Naive thymus-derived CD4-positive, alpha-beta T cell (primary cell): ENCODE measurements at regions of chr10 and their contacts with region 1.

Region 1: DNA sequence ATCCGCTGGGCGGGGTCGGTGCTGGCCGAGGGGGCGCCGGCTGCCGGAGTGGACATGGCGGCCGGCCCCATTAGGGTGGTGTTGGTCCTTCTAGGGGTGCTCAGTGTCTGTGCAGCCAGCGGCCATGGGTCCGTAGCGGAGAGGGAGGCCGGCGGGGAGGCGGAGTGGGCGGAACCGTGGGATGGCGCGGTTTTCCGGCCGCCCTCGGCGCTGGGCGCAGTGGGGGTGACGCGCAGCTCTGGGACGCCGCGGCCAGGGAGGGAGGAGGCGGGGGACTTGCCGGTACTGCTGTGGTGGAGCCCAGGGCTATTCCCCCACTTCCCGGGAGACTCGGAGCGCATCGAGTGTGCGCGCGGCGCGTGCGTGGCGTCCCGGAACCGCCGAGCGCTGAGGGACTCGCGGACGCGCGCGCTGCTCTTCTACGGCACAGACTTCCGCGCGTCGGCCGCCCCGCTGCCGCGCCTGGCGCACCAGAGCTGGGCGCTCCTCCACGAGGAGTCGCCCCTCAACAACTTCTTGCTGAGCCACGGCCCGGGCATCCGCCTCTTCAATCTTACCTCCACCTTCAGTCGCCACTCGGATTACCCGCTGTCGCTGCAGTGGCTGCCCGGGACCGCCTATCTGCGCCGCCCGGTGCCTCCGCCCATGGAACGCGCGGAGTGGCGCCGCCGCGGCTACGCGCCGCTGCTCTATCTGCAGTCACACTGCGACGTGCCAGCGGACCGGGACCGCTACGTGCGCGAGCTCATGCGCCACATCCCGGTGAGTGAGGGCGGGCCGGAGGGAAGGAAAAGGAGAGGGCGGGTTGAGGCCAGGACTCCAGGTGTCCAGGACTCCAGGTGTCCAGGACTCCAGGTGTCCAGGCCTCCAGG is 9.3 kb upstream of the CHCHD1 start:
- DNase-seq: peak; percentile 75 to 90 (median 83)
- ATAC-seq: peak; percentile 80
- H3K4me3 ChIP-seq: peak overlapping the region; percentile 69
- H3K4me3 Mint-ChIP-seq: peak overlapping the region; percentile 87 to 97 (median 95)
- H3K27ac ChIP-seq: peak overlapping the region; percentile 85
- H3K27ac Mint-ChIP-seq: peak overlapping the region; percentile 89 to 97 (median 94)
- H3K4me1 ChIP-seq: peaks cover 27 to 30% of the 10 kb centered on the region in 2 donors
- H3K4me1 Mint-ChIP-seq: peaks cover 34 to 73% (median 64%) of the 10 kb centered on the region in 7 donors
- H3K27me3 ChIP-seq: no peaks in the 10 kb centered on the region
- H3K27me3 Mint-ChIP-seq: no peaks in the 10 kb centered on the region

Region 2: DNA sequence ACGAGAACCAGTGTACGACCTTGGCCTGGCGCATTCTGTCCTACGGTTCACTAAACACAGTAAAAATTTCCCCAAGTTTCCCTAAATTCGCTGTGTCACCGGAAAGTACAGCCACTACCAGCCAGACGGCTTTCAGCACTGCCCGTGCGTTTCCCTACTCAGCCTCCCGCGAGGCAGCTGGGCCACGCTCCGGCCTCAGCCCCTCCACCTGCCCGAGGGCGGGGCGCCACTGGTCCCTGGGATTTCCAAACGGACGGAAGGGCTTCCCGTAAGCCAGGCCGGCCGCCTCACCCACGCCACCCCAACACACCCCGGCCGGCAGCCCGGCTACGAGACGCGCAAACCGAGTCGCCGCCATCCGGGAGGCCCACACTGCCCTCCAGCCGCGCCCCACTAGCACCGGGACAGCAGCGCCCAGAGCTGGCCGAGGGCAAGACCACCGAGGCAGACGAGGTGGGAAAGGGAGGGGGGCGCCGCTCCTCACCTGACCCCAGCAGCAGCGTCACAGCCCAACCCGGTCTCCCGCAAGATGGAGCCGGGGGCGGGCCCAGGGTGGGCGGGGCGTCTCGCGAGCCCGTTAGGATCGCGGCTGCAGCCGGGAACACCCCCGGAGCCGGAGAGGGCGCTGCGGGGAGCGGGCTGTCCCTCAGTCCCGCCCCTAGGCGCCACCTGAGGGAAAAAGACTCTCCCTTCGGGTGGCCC is 358.8 kb before region 1 on chr10 and contains the start of gene ANXA7:
- CTCF ChIA-PET with region 1: no interaction called
- POLR2A ChIA-PET with region 1: interaction called, 3 read pairs
- intact Hi-C with region 1: loop called in 1 of 2 experiments (anchors 10 kb)
- DNase-seq: peak; percentile 78 to 93 (median 85)
- ATAC-seq: peak; percentile 99
- H3K4me3 ChIP-seq: peak within 1 kb of the TSS; percentile 78
- H3K4me3 Mint-ChIP-seq: peak within 1 kb of the TSS; percentile 82 to 97 (median 94)
- H3K27ac ChIP-seq: peak within 1 kb of the TSS; percentile 98
- H3K27ac Mint-ChIP-seq: peak within 1 kb of the TSS; percentile 83 to 95 (median 90)
- H3K4me1 ChIP-seq: peaks cover 8 to 16% of the 10 kb centered on the region in 2 donors
- H3K4me1 Mint-ChIP-seq: peaks cover 39 to 60% (median 53%) of the 10 kb centered on the region in 7 donors
- H3K27me3 ChIP-seq: no peaks in the 10 kb centered on the region
- H3K27me3 Mint-ChIP-seq: peaks cover 0 to 4% (median 0%) of the 10 kb centered on the region in 5 donors
- total RNA-seq, gene ANXA7: 74.8 to 118 (median 97.3) TPM

Region 3: GRCh38 chr10:73591935-73592699 is 180.4 kb before region 1 on chr10:
- CTCF ChIA-PET with region 1: no interaction called
- POLR2A ChIA-PET with region 1: no interaction called
- intact Hi-C with region 1: no loop called
- DNase-seq: peak in 4 of 9 donors; percentile 6 to 28 (median 14)
- ATAC-seq: peak; percentile 66
- H3K4me3 ChIP-seq: no peak overlapping the region
- H3K4me3 Mint-ChIP-seq: peak overlapping the region; percentile 34 to 84 (median 70)
- H3K27ac ChIP-seq: peak overlapping the region; percentile 31
- H3K27ac Mint-ChIP-seq: peak overlapping the region; percentile 58 to 84 (median 78)
- H3K4me1 ChIP-seq: peaks cover 0 to 17% of the 10 kb centered on the region in 2 donors
- H3K4me1 Mint-ChIP-seq: peaks cover 12 to 32% (median 27%) of the 10 kb centered on the region in 7 donors
- H3K27me3 ChIP-seq: no peaks in the 10 kb centered on the region
- H3K27me3 Mint-ChIP-seq: no peaks in the 10 kb centered on the region

Region 4: DNA sequence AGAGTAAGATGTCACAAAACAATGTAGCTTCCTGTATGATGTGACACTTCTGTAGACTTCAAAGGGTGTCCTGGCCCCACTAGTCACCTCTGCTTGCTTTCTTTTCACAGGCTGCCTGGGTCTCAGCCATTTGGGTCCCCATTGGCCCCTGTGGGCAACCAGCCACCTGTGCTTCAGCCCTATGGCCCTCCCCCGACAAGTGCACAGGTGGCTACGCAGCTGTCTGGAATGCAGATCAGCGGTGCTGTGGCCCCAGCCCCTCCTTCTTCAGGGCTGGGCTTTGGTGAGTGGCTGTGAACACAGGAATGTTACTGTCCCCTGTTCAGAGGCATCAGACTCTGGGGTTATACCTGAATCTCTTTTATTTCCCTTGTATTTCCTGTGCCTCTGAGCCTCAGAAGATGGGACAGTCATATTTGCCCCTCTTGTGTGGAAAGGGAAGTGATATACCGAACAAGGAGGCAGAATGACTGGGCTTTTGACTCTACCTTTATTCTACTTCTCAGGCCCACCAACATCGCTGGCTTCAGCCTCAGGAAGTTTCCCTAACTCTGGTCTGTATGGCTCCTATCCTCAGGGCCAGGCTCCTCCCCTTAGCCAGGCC is 12.9 kb before region 1 on chr10:
- CTCF ChIA-PET with region 1: interaction called, 11 read pairs
- POLR2A ChIA-PET with region 1: interaction called, 25 read pairs
- intact Hi-C with region 1: no loop called
- DNase-seq: peak in 3 of 9 donors; percentile 12 to 40 (median 19)
- ATAC-seq: peak; percentile 92
- H3K4me3 ChIP-seq: peak overlapping the region; percentile 5
- H3K4me3 Mint-ChIP-seq: peak overlapping the region in 7 of 10 donors; percentile 13 to 55 (median 40)
- H3K27ac ChIP-seq: peak overlapping the region; percentile 56
- H3K27ac Mint-ChIP-seq: peak overlapping the region; percentile 26 to 79 (median 72)
- H3K4me1 ChIP-seq: peaks cover 10 to 61% of the 10 kb centered on the region in 2 donors
- H3K4me1 Mint-ChIP-seq: peaks cover 22 to 55% (median 41%) of the 10 kb centered on the region in 7 donors
- H3K27me3 ChIP-seq: no peaks in the 10 kb centered on the region
- H3K27me3 Mint-ChIP-seq: no peaks in the 10 kb centered on the region

Region 5: DNA sequence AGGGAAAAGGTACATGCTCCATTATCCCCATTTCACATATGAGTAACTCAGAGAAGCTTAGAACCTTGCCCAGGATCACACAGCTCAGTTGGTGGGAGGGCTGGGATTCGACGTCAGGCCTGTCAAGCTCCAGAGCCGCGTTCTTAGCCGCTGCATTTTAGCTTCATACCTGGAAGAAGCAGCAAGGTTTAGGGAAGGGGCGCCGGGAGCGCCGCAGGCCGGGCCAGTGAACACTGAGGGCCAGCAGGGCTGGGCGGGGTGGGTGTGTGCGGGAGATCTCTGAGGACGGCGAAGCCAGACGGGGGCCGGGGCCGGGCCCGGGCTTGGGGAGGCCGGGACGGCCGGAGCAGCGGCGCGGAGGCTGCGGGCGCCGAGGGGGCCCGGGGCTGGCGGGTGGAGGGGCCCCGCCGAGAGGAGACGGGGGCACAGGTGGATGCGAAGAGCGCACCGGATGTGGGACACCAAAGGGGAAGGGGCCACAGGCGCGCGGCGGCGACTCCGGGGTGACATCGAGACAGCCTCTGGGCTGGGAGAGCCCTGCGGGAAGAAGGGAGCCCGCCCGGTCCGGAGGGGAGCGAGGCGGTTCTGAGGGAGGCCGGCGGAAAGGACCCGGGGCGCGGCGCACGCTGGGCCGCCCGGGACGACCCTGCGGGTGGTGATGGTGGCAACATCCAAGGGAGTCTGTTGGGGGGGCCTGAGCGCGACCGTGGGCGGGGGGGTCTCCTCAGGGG is 38.4 kb after region 1 on chr10:
- CTCF ChIA-PET with region 1: interaction called, 6 read pairs
- POLR2A ChIA-PET with region 1: interaction called, 150 read pairs
- intact Hi-C with region 1: loop called (anchors 1 kb)
- DNase-seq: peak; percentile 46 to 76 (median 71)
- ATAC-seq: peak; percentile 18
- H3K4me3 ChIP-seq: peak overlapping the region; percentile 69
- H3K4me3 Mint-ChIP-seq: peak overlapping the region; percentile 88 to 97 (median 94)
- H3K27ac ChIP-seq: peak overlapping the region; percentile 97
- H3K27ac Mint-ChIP-seq: peak overlapping the region; percentile 94 to 98 (median 96)
- H3K4me1 ChIP-seq: peaks cover 26 to 31% of the 10 kb centered on the region in 2 donors
- H3K4me1 Mint-ChIP-seq: peaks cover 31 to 54% (median 49%) of the 10 kb centered on the region in 7 donors
- H3K27me3 ChIP-seq: no peaks in the 10 kb centered on the region
- H3K27me3 Mint-ChIP-seq: no peaks in the 10 kb centered on the region

Region 6: GRCh38 chr10:73959484-73960243 is 187.1 kb after region 1 on chr10:
- CTCF ChIA-PET with region 1: no interaction called
- POLR2A ChIA-PET with region 1: no interaction called
- intact Hi-C with region 1: no loop called
- DNase-seq: no peak
- ATAC-seq: peak; percentile 36
- H3K4me3 ChIP-seq: no peak overlapping the region
- H3K4me3 Mint-ChIP-seq: peak overlapping the region in 3 of 10 donors; percentile 4 to 26 (median 19)
- H3K27ac ChIP-seq: no peak overlapping the region
- H3K27ac Mint-ChIP-seq: peak overlapping the region; percentile 5 to 87 (median 49)
- H3K4me1 ChIP-seq: peaks cover 31 to 41% of the 10 kb centered on the region in 2 donors
- H3K4me1 Mint-ChIP-seq: peaks cover 26 to 50% (median 45%) of the 10 kb centered on the region in 7 donors
- H3K27me3 ChIP-seq: no peaks in the 10 kb centered on the region
- H3K27me3 Mint-ChIP-seq: peaks cover 0 to 7% (median 0%) of the 10 kb centered on the region in 5 donors

Region 7: GRCh38 chr10:74071157-74071556 is 298.6 kb after region 1 on chr10:
- CTCF ChIA-PET with region 1: no interaction called
- POLR2A ChIA-PET with region 1: no interaction called
- intact Hi-C with region 1: no loop called
- DNase-seq: no peak
- ATAC-seq: no peak
- H3K4me3 ChIP-seq: no peak overlapping the region
- H3K4me3 Mint-ChIP-seq: no peak overlapping the region
- H3K27ac ChIP-seq: no peak overlapping the region
- H3K27ac Mint-ChIP-seq: peak overlapping the region in 1 of 9 donors; percentile 49
- H3K4me1 ChIP-seq: no peaks in the 10 kb centered on the region
- H3K4me1 Mint-ChIP-seq: peaks cover 0 to 7% (median 0%) of the 10 kb centered on the region in 7 donors
- H3K27me3 ChIP-seq: no peaks in the 10 kb centered on the region
- H3K27me3 Mint-ChIP-seq: no peaks in the 10 kb centered on the region

Region 8: DNA sequence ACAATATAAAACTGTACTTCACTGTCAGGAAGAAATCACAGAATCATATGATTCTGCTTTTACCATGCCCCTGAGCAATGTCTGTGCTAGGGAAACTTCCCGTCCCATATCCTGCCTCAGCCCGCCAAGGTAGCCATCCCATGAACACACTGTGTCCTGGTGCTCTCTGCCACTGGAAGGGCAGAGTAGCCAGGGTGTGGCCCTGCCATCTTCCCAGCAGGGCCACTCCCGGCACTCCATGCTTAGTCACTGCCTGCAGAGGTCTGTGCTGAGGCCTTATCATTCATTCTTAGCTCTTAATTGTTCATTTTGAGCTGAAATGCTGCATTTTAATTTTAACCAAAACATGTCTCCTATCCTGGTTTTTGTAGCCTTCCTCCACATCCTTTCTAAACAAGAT is 346.3 kb after region 1 on chr10:
- CTCF ChIA-PET with region 1: no interaction called
- POLR2A ChIA-PET with region 1: no interaction called
- intact Hi-C with region 1: no loop called
- DNase-seq: no peak
- ATAC-seq: no peak
- H3K4me3 ChIP-seq: no peak overlapping the region
- H3K4me3 Mint-ChIP-seq: no peak overlapping the region
- H3K27ac ChIP-seq: no peak overlapping the region
- H3K27ac Mint-ChIP-seq: peak overlapping the region in 7 of 9 donors; percentile 40 to 68 (median 56)
- H3K4me1 ChIP-seq: no peaks in the 10 kb centered on the region
- H3K4me1 Mint-ChIP-seq: peaks cover 5 to 14% (median 8%) of the 10 kb centered on the region in 7 donors
- H3K27me3 ChIP-seq: no peaks in the 10 kb centered on the region
- H3K27me3 Mint-ChIP-seq: no peaks in the 10 kb centered on the region